SK-N-SH (cell line): ENCODE measurements at regions of chrX and their contacts with region 1.

Region 1: DNA sequence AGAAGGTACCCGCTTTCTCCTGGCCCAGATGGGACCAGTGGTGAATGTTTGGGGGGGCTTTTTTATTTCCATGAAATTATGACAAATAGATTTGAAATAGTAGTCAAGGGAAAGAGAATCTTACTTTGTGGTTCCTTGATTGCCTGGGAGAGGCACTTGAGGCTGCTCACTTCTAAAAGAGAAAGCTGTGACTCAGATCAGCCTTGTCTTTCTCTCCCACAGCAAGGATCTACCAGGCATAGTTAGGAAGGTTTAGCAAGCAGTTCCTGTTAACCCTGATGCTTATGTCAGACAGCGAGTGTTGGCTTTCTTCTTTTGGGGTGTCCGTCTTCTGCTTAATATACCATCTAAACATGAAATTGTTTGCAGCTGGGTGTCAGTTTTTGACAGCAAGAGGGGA is 114.5 kb downstream of the TSPAN7 start:
- DNase-seq: no peak
- H3K4me3 ChIP-seq: no peak overlapping the region
- H3K27ac ChIP-seq: no peak overlapping the region
- H3K4me1 ChIP-seq: no peaks in the 10 kb centered on the region
- H3K27me3 ChIP-seq: no peaks in the 10 kb centered on the region; the same call in none of the 2 replicates
- CTCF ChIP-seq: no peak
- EP300 ChIP-seq: no peak
- RAD21 ChIP-seq: no peak

Region 2: GRCh38 chrX:38552721-38553120 is 123.1 kb before region 1 on chrX:
- CTCF ChIA-PET with region 1: no interaction called
- POLR2A ChIA-PET with region 1: no interaction called
- DNase-seq: no peak
- H3K4me3 ChIP-seq: no peak overlapping the region
- H3K27ac ChIP-seq: no peak overlapping the region
- H3K4me1 ChIP-seq: no peaks in the 10 kb centered on the region
- H3K27me3 ChIP-seq: no peaks in the 10 kb centered on the region
- CTCF ChIP-seq: no peak
- EP300 ChIP-seq: no peak
- RAD21 ChIP-seq: no peak

Region 3: DNA sequence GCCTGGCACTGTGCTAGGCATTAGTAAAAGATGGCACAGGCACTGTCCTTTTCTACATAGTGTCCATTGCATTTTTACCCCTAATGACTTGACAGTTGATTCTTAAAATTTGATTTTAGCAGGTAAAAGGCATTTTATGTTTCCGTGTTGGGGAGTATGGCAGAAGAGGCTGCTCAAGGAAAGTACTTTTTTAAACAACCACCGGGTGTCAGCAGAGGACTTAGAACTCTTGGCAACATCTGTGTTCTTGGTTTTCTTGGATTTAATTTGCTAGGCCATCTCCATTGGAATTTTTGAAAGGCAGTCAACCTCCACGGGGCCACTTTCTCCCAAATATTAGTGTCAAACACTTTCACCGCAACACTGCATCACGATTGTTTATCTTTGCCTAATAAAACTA is 11.6 kb before region 1 on chrX:
- CTCF ChIA-PET with region 1: interaction called, 13 read pairs
- POLR2A ChIA-PET with region 1: no interaction called
- DNase-seq: peak; percentile 28
- H3K4me3 ChIP-seq: no peak overlapping the region
- H3K27ac ChIP-seq: no peak overlapping the region
- H3K4me1 ChIP-seq: no peaks in the 10 kb centered on the region; a peak in 1 of 4 replicates
- H3K27me3 ChIP-seq: no peaks in the 10 kb centered on the region
- CTCF ChIP-seq: peak; percentile 57
- EP300 ChIP-seq: no peak
- RAD21 ChIP-seq: peak; percentile 74

Region 4: DNA sequence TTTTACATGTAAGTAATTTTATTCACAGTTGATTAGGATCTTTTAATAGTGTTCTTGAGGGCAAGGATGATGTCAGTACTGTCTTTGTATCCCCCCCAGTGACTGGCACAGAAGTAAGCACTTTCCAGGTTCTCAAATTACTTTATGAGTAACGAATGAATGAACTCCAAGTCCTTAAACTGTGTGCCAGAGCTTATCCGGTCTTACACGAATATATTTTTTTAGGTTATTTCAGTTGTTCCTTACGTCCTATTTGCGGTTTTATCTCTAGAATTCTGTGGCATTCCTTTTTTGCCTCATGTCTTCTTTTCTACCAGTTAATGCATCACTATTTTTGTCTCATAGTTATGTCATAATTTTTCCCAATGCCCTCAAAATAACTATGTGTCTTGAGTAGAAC is 18.5 kb after region 1 on chrX:
- CTCF ChIA-PET with region 1: no interaction called
- POLR2A ChIA-PET with region 1: no interaction called
- DNase-seq: no peak
- H3K4me3 ChIP-seq: no peak overlapping the region
- H3K27ac ChIP-seq: no peak overlapping the region
- H3K4me1 ChIP-seq: no peaks in the 10 kb centered on the region
- H3K27me3 ChIP-seq: no peaks in the 10 kb centered on the region
- CTCF ChIP-seq: no peak
- EP300 ChIP-seq: no peak
- RAD21 ChIP-seq: no peak